ENCODE measurements at regions of chr4 and their contacts with region 1.

Region 1: DNA sequence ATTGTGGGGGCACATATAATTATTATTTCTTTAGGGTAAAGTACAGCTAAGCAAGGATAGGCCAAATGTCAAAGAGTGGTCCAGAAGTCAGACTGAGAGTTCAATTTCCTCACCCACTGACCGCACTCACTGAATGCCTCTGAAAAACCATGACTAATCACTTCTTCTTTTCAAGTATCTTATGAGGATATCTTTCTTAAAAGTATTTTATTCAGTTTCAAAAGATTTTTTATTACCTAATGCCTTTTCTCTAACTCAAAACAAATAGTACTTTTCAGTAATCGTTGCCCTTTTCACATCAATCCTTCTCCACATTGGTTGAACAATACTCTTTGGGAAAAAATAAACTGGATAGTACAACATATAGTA is 61.7 kb upstream of the CAMK2D start:
- DNase-seq: peak; percentile 12
- ATAC-seq: no peak
- H3K4me3 Mint-ChIP-seq: no peak overlapping the region
- H3K27ac Mint-ChIP-seq: peak overlapping the region; percentile 40
- H3K4me1 Mint-ChIP-seq: peaks cover 62% of the 10 kb centered on the region
- H3K27me3 Mint-ChIP-seq: no peaks in the 10 kb centered on the region

Region 2: DNA sequence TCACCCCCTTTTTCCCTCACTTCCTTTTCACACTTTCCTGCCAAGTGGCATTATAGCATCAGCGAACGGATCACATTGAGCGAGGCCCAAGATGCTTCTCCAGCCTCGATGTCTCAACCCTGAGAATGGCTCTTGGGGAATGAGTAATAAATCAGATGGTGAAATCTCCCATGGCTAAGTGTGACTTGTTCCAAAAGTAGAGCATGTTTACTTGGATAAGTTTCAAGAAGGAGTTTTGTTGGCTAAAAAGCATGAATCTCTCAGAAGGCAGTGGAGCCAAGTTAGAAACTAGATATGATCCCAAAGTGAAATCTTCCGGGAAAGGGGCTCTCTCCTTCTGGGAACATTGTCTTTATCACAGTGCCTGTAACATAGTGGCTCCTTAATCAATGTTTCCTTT is 378.0 kb before region 1 on chr4:
- CTCF ChIA-PET with region 1: no interaction called
- POLR2A ChIA-PET with region 1: no interaction called
- intact Hi-C with region 1: loop called in 1 of 2 experiments (anchors 2 kb)
- DNase-seq: no peak
- ATAC-seq: no peak
- H3K4me3 Mint-ChIP-seq: no peak overlapping the region
- H3K27ac Mint-ChIP-seq: peak overlapping the region; percentile 85
- H3K4me1 Mint-ChIP-seq: peaks cover 27% of the 10 kb centered on the region
- H3K27me3 Mint-ChIP-seq: no peaks in the 10 kb centered on the region

Region 3: GRCh38 chr4:113474017-113474416 is 349.3 kb before region 1 on chr4:
- CTCF ChIA-PET with region 1: no interaction called
- POLR2A ChIA-PET with region 1: no interaction called
- intact Hi-C with region 1: loop called in 1 of 2 experiments (anchors 1 kb)
- DNase-seq: peak; percentile 47
- ATAC-seq: peak; percentile 76
- H3K4me3 Mint-ChIP-seq: no peak overlapping the region
- H3K27ac Mint-ChIP-seq: peak overlapping the region; percentile 88
- H3K4me1 Mint-ChIP-seq: peaks cover 66% of the 10 kb centered on the region
- H3K27me3 Mint-ChIP-seq: no peaks in the 10 kb centered on the region

Region 4: GRCh38 chr4:113781439-113782040 is 41.7 kb before region 1 on chr4:
- CTCF ChIA-PET with region 1: interaction called, 5 read pairs
- POLR2A ChIA-PET with region 1: no interaction called
- intact Hi-C with region 1: loop called (anchors 5 kb)
- DNase-seq: no peak
- ATAC-seq: no peak
- H3K4me3 Mint-ChIP-seq: no peak overlapping the region
- H3K27ac Mint-ChIP-seq: no peak overlapping the region
- H3K4me1 Mint-ChIP-seq: peaks cover 31% of the 10 kb centered on the region
- H3K27me3 Mint-ChIP-seq: no peaks in the 10 kb centered on the region

Region 5: DNA sequence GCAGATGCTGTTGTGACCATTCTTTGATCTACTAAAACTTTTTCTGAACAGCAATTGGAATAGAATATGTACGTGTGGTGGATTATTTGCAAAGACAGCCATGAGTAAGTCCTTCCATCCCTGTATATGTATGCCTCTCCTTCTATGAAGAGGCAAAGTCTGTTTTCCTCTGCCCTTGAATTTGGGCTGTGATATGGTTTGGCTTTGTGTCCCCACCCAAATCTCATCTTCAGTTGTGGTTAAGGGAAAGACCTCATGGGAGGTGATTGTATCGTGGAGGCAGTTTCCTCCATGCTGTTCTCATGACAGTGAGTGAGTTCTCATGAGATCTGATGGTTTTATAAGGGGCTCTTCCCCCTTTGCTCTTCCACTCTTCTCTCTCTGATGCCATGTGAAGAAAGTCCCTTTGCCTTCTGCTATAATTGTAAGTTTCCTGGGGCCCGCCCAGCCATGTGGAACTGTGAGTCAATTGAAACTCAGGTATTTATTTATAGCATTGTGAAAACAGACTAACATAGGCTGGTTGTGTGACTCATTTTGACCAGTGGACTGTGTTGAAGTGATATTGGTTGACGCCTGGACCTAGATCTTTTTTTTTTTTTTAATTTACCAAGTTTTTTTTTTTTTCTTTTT is 46.6 kb after region 1 on chr4:
- CTCF ChIA-PET with region 1: no interaction called
- POLR2A ChIA-PET with region 1: no interaction called
- intact Hi-C with region 1: loop called in 1 of 2 experiments (anchors 2 kb)
- DNase-seq: peak; percentile 81
- ATAC-seq: peak; percentile 94
- H3K4me3 Mint-ChIP-seq: peak overlapping the region; percentile 26
- H3K27ac Mint-ChIP-seq: peak overlapping the region; percentile 85
- H3K4me1 Mint-ChIP-seq: peaks cover 38% of the 10 kb centered on the region
- H3K27me3 Mint-ChIP-seq: no peaks in the 10 kb centered on the region

Region 6: GRCh38 chr4:114442856-114443255 is 619.6 kb after region 1 on chr4:
- CTCF ChIA-PET with region 1: no interaction called
- POLR2A ChIA-PET with region 1: no interaction called
- intact Hi-C with region 1: no loop called
- DNase-seq: no peak
- ATAC-seq: no peak
- H3K4me3 Mint-ChIP-seq: no peak overlapping the region
- H3K27ac Mint-ChIP-seq: no peak overlapping the region
- H3K4me1 Mint-ChIP-seq: no peaks in the 10 kb centered on the region
- H3K27me3 Mint-ChIP-seq: peaks cover 6% of the 10 kb centered on the region